ENCODE measurements at regions of chr11 and their contacts with region 1.

Region 1: DNA sequence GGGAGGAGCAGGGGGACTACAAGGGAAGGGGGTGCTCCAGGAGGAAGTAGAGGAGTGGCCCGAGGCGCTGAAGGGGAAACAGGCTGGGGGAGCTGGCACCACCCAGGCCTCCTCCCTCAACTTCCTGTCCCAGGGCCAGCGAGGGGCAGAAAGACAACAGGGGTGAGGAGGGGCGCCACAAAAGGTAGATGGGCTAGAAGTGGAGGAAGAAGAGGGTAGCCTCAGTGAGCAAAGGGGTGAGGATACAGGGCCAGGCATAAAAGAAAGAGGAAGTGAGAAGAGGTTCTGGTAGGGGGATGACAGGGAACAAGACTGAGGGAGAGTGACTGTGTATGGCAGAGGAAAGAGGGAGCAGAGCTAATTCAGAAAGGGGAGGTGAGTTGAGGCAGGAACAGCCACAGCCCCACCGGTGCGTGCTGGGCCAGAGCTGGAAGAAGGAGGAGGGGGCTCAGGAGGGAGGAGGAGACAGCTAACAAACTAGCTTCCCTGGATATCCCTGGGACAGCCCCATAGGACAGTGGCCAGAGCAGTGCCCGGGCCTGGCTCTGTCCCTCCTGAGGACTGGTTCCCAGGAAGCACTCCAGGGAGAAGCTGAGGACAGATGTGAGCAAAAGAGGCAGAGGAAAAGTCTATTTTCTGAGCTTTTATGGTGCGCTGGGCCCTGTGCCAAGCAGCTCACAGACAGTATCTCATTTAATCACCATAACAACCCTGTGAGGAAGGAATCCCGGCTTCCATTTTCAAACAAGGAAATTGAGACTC is 8.5 kb downstream of the DCHS1 start:
- DNase-seq: peak in 3 of 5 donors; percentile 22 to 31 (median 22)
- H3K4me3 ChIP-seq: peak overlapping the region; percentile 8 to 26
- H3K4me3 Mint-ChIP-seq: no peak overlapping the region
- H3K27ac ChIP-seq: peak overlapping the region; percentile 54
- H3K27ac Mint-ChIP-seq: no peak overlapping the region
- H3K4me1 ChIP-seq: peaks cover 44% of the 10 kb centered on the region
- H3K4me1 Mint-ChIP-seq: peaks cover 0 to 12% (median 0%) of the 10 kb centered on the region in 4 donors
- H3K27me3 ChIP-seq: no peaks in the 10 kb centered on the region
- H3K27me3 Mint-ChIP-seq: no peaks in the 10 kb centered on the region

Region 2: GRCh38 chr11:6660712-6661111 is 13.6 kb after region 1 on chr11:
- CTCF ChIA-PET with region 1: interaction called, 14 read pairs
- POLR2A ChIA-PET with region 1: interaction called, 7 read pairs
- intact Hi-C with region 1: no loop called
- DNase-seq: no peak
- H3K4me3 ChIP-seq: no peak overlapping the region
- H3K4me3 Mint-ChIP-seq: no peak overlapping the region
- H3K27ac ChIP-seq: no peak overlapping the region
- H3K27ac Mint-ChIP-seq: no peak overlapping the region
- H3K4me1 ChIP-seq: peaks cover 4% of the 10 kb centered on the region
- H3K4me1 Mint-ChIP-seq: peaks cover 5 to 19% (median 9%) of the 10 kb centered on the region in 4 donors
- H3K27me3 ChIP-seq: peaks cover 7% of the 10 kb centered on the region
- H3K27me3 Mint-ChIP-seq: peaks cover 0 to 2% of the 10 kb centered on the region in 2 donors

Region 3: DNA sequence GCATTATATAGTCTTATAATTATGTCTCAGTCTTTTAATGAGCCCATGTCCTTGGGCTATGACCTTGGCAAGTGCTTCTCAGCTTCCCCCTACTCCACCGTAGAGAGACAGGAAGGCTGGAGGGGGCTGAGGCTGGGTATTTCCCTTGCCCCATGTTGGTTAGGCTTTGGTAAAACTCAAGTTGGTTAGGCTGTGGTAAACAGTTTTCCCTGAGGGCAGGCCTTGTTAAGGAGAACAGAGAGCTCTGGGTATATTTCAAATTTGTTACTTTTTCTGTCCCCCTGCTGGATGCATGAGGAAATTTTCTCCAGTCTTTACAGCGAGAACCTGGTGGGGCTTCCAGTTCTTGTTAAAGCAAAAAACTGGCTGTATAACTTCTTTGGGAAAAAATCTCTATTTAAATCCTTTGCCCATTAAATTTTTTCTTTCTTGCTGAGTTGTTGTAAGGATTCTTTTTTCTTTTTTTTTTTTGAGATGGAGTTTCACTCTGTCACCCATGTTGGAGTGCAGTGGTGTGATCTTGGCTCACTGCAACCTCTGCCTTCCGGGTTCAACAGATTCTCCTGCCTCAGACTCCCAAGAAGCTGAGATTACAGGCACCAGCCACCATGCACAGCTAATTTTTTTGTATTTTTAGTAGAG is 20.8 kb after region 1 on chr11:
- CTCF ChIA-PET with region 1: interaction called, 17 read pairs
- POLR2A ChIA-PET with region 1: interaction called, 15 read pairs
- intact Hi-C with region 1: loop called (anchors 2 kb)
- DNase-seq: peak; percentile 48 to 78 (median 54)
- H3K4me3 ChIP-seq: no peak overlapping the region
- H3K4me3 Mint-ChIP-seq: peak overlapping the region in 7 of 8 donors; percentile 5 to 35 (median 16)
- H3K27ac ChIP-seq: no peak overlapping the region
- H3K27ac Mint-ChIP-seq: peak overlapping the region; percentile 11 to 88 (median 74)
- H3K4me1 ChIP-seq: peaks cover 59% of the 10 kb centered on the region
- H3K4me1 Mint-ChIP-seq: peaks cover 45 to 87% (median 54%) of the 10 kb centered on the region in 4 donors
- H3K27me3 ChIP-seq: no peaks in the 10 kb centered on the region
- H3K27me3 Mint-ChIP-seq: no peaks in the 10 kb centered on the region

Region 4: DNA sequence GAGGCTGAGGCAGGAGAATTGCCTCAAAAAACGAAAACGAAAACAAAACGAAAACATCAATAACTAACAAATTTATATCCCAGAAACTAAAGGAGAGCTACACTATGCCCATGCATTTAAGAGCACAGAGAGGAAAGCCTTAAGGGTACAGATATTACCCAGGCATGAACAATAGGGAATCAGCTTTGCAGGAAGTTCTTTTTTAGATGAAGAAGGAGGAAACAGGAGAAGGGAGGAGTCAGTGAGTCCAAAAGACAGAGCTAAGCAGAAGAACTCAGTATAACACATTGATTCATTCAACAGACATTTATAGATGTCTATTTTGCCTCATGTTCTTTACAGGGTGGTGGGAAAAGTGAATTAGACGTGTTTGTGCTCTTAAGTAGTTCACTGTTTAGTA is 27.8 kb after region 1 on chr11:
- CTCF ChIA-PET with region 1: interaction called, 3 read pairs
- POLR2A ChIA-PET with region 1: interaction called, 12 read pairs
- intact Hi-C with region 1: no loop called
- DNase-seq: no peak
- H3K4me3 ChIP-seq: no peak overlapping the region
- H3K4me3 Mint-ChIP-seq: peak overlapping the region in 2 of 8 donors; percentile 26 to 82
- H3K27ac ChIP-seq: no peak overlapping the region
- H3K27ac Mint-ChIP-seq: peak overlapping the region in 1 of 7 donors; percentile 5
- H3K4me1 ChIP-seq: peaks cover 53% of the 10 kb centered on the region
- H3K4me1 Mint-ChIP-seq: peaks cover 43 to 70% (median 55%) of the 10 kb centered on the region in 4 donors
- H3K27me3 ChIP-seq: no peaks in the 10 kb centered on the region
- H3K27me3 Mint-ChIP-seq: no peaks in the 10 kb centered on the region

Measured in CD4-positive, alpha-beta memory T cell (primary cell).